Activated T-helper 1 cell treated with anti-CD3 and anti-CD28 coated beads, Interleukin-12 subunit alpha, Interleukin-12 subunit beta, Interleukin-2, Interleukin-4 antibody, amounts not matched to agents 30 ng/mL and 10 ng/mL and 1 ng/mL, durations not matched to agents 14 hours and 24 hours and 36 hours (primary cell): ENCODE measurements at regions of chr5 and their contacts with region 1.

Region 1: GRCh38 chr5:150350524-150351344 is 6.8 kb upstream of the TCOF1 start:
- DNase-seq: peak; percentile 33
- H3K4me3 Mint-ChIP-seq: peak overlapping the region; percentile 17
- H3K27ac Mint-ChIP-seq: peak overlapping the region; percentile 42
- H3K4me1 Mint-ChIP-seq: peaks cover 9% of the 10 kb centered on the region
- H3K27me3 Mint-ChIP-seq: peaks cover 5% of the 10 kb centered on the region

Region 2: GRCh38 chr5:150161242-150162141 is 189.2 kb before region 1 on chr5:
- intact Hi-C with region 1: loop called (anchors 1 kb)
- DNase-seq: peak; percentile 68
- H3K4me3 Mint-ChIP-seq: no peak overlapping the region
- H3K27ac Mint-ChIP-seq: no peak overlapping the region
- H3K4me1 Mint-ChIP-seq: no peaks in the 10 kb centered on the region
- H3K27me3 Mint-ChIP-seq: peaks cover 21% of the 10 kb centered on the region

Region 3: GRCh38 chr5:150372639-150373038 is 21.9 kb after region 1 on chr5:
- intact Hi-C with region 1: no loop called
- DNase-seq: no peak
- H3K4me3 Mint-ChIP-seq: no peak overlapping the region
- H3K27ac Mint-ChIP-seq: no peak overlapping the region
- H3K4me1 Mint-ChIP-seq: no peaks in the 10 kb centered on the region
- H3K27me3 Mint-ChIP-seq: no peaks in the 10 kb centered on the region